Caco-2 (cell line): ENCODE measurements at regions of chr10 and their contacts with region 1.

Region 1: GRCh38 chr10:78263521-78263988 is 229.9 kb downstream of the RPS24 start:
- DNase-seq: no peak
- H3K4me3 ChIP-seq: no peak overlapping the region
- H3K4me3 Mint-ChIP-seq: no peak overlapping the region
- H3K27ac Mint-ChIP-seq: no peak overlapping the region
- H3K4me1 ChIP-seq: peaks cover 40% of the 10 kb centered on the region
- H3K4me1 Mint-ChIP-seq: peaks cover 45% of the 10 kb centered on the region
- H3K27me3 ChIP-seq: no peaks in the 10 kb centered on the region
- H3K27me3 Mint-ChIP-seq: no peaks in the 10 kb centered on the region
- CTCF ChIP-seq: no peak

Region 2: DNA sequence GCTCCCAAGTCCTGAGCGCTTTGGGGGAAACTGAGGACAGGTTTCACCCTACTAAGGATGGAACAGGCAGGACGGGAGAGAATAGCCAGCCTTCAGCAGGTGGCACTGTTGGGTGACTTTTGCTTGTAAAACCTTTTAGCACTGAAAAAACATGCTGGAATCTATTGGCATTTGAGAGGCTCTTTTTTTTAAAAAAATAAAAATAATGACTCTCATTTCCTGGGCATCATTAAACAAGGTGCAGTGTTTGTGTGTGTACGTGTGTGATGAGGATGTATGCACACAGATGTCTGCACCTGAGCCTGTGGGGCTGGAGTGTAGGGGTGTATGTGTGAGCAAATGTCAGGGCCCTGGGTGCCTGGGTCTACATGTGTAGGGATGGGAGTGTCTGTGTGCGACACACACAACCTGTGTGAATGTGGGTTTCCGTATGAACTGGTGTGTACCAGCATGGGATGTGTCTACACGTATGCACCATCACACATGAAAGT is 51.9 kb before region 1 on chr10:
- CTCF ChIA-PET with region 1: no interaction called
- POLR2A ChIA-PET with region 1: no interaction called
- intact Hi-C with region 1: loop called (anchors 5 kb)
- DNase-seq: peak in 1 of 2 experiments; percentile 58
- H3K4me3 ChIP-seq: no peak overlapping the region
- H3K4me3 Mint-ChIP-seq: no peak overlapping the region
- H3K27ac Mint-ChIP-seq: no peak overlapping the region
- H3K4me1 ChIP-seq: no peaks in the 10 kb centered on the region
- H3K4me1 Mint-ChIP-seq: no peaks in the 10 kb centered on the region
- H3K27me3 ChIP-seq: no peaks in the 10 kb centered on the region; the same call in 1 of the 2 replicates
- H3K27me3 Mint-ChIP-seq: no peaks in the 10 kb centered on the region
- CTCF ChIP-seq: peak; percentile 36 to 75